A549 (cell line): ENCODE measurements at regions of chr2 and their contacts with region 1.

Region 1: GRCh38 chr2:26577434-26578112 is 63.6 kb downstream of the CIB4 start:
- DNase-seq: peak; percentile 71 to 95
- ATAC-seq: peak; percentile 73 to 93
- H3K4me3 ChIP-seq: no peak overlapping the region
- H3K27ac ChIP-seq: peak overlapping the region in 1 of 2 experiments; percentile 47; a peak in 3 of 6 replicates
- H3K4me1 ChIP-seq: peaks cover 4% of the 10 kb centered on the region; the same call in 2 of the 3 replicates
- CTCF ChIP-seq: peak; percentile 98
- EP300 ChIP-seq: no peak
- POLR2A ChIP-seq: no peak
- RAD21 ChIP-seq: peak; percentile 93 to 96

Region 2: GRCh38 chr2:26316041-26316440 is 261.5 kb before region 1 on chr2:
- CTCF ChIA-PET with region 1: interaction called, 11 read pairs
- POLR2A ChIA-PET with region 1: no interaction called
- DNase-seq: peak; percentile 35 to 64
- ATAC-seq: peak; percentile 48 to 73
- H3K4me3 ChIP-seq: no peak overlapping the region
- H3K27ac ChIP-seq: no peak overlapping the region
- H3K4me1 ChIP-seq: no peaks in the 10 kb centered on the region
- CTCF ChIP-seq: peak; percentile 44
- EP300 ChIP-seq: no peak
- POLR2A ChIP-seq: no peak
- RAD21 ChIP-seq: peak; percentile 46 to 60; a peak in 3 of 5 replicates

Region 3: GRCh38 chr2:26382564-26382963 is 195.0 kb before region 1 on chr2:
- CTCF ChIA-PET with region 1: no interaction called
- POLR2A ChIA-PET with region 1: no interaction called
- DNase-seq: no peak
- ATAC-seq: no peak
- H3K4me3 ChIP-seq: no peak overlapping the region
- H3K27ac ChIP-seq: no peak overlapping the region
- H3K4me1 ChIP-seq: no peaks in the 10 kb centered on the region
- CTCF ChIP-seq: no peak
- EP300 ChIP-seq: no peak
- POLR2A ChIP-seq: no peak
- RAD21 ChIP-seq: no peak

Region 4: GRCh38 chr2:26503231-26503880 is 74.2 kb before region 1 on chr2:
- CTCF ChIA-PET with region 1: interaction called, 60 read pairs
- POLR2A ChIA-PET with region 1: no interaction called
- DNase-seq: peak; percentile 91 to 99
- ATAC-seq: peak; percentile 95 to 99
- H3K4me3 ChIP-seq: peak overlapping the region; percentile 63
- H3K27ac ChIP-seq: peak overlapping the region; percentile 82 to 91
- H3K4me1 ChIP-seq: peaks cover 5% of the 10 kb centered on the region; the same call in 1 of the 3 replicates
- CTCF ChIP-seq: peak; percentile 100
- EP300 ChIP-seq: no peak
- POLR2A ChIP-seq: peak; percentile 91
- RAD21 ChIP-seq: peak; percentile 45 to 84; a peak in 4 of 5 replicates

Region 5: DNA sequence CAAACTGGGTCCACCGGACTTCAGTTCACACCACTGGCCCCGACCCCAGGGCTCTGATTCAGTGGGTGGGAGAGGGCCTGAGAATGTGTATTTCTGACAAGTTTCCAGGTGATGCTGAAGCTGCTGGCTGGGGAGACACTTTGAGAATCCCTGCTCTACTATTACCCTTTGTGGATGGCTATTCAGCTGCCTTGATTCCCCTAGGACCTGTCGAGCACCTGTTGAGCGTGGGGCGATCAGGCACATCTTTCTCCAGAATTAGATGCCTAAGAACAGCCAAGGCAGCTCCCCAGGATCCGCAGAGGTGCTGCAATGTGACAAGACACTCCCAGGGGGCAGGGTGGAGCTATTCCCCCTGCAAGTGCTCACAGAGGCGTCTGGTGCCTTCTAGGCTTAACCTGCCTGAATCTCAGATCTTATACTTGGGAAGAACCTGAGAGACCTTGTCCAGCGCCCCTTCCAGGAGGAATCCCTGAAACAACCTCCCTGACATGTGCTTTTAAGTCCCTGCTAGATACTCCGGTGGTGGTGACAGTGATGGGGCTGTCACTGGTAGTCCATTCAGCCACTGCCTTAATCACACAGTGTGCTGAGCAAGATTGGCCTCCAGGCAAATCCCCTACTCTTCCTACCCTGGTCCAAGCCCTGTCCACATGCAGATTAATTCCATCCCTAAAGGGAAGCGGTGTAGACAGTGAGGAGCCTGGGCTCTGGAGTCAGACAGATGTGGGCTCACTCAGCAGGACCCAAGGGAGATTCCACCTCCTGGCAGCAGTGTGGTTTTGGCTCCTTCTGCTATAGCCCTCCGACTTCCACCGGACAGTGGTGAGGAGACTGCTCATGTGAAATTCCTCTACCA is 56.3 kb before region 1 on chr2:
- CTCF ChIA-PET with region 1: interaction called, 90 read pairs
- POLR2A ChIA-PET with region 1: no interaction called
- DNase-seq: peak; percentile 69 to 83
- ATAC-seq: peak; percentile 81 to 92
- H3K4me3 ChIP-seq: no peak overlapping the region
- H3K27ac ChIP-seq: no peak overlapping the region
- H3K4me1 ChIP-seq: no peaks in the 10 kb centered on the region
- CTCF ChIP-seq: peak; percentile 61
- EP300 ChIP-seq: no peak
- POLR2A ChIP-seq: no peak
- RAD21 ChIP-seq: peak; percentile 60 to 68

Region 6: DNA sequence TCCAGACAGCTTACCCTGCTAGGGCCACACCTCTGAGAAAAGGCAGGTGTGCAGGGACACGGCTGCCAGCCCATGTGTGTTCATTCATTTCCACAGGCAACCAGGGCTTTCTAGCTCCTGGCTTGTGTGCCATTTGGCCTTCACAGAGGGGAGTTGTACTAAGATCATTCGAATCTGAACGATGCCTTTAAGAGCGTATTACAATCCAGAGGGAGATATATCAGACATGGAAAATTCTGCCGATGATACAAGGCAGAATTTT is 35.4 kb before region 1 on chr2:
- CTCF ChIA-PET with region 1: interaction called, 28 read pairs
- POLR2A ChIA-PET with region 1: no interaction called
- DNase-seq: no peak
- ATAC-seq: peak in 1 of 2 experiments; percentile 28; a peak in 2 of 6 replicates
- H3K4me3 ChIP-seq: no peak overlapping the region
- H3K27ac ChIP-seq: no peak overlapping the region
- H3K4me1 ChIP-seq: peaks cover 3% of the 10 kb centered on the region; the same call in 1 of the 3 replicates
- CTCF ChIP-seq: no peak
- EP300 ChIP-seq: no peak
- POLR2A ChIP-seq: no peak
- RAD21 ChIP-seq: no peak

Region 7: DNA sequence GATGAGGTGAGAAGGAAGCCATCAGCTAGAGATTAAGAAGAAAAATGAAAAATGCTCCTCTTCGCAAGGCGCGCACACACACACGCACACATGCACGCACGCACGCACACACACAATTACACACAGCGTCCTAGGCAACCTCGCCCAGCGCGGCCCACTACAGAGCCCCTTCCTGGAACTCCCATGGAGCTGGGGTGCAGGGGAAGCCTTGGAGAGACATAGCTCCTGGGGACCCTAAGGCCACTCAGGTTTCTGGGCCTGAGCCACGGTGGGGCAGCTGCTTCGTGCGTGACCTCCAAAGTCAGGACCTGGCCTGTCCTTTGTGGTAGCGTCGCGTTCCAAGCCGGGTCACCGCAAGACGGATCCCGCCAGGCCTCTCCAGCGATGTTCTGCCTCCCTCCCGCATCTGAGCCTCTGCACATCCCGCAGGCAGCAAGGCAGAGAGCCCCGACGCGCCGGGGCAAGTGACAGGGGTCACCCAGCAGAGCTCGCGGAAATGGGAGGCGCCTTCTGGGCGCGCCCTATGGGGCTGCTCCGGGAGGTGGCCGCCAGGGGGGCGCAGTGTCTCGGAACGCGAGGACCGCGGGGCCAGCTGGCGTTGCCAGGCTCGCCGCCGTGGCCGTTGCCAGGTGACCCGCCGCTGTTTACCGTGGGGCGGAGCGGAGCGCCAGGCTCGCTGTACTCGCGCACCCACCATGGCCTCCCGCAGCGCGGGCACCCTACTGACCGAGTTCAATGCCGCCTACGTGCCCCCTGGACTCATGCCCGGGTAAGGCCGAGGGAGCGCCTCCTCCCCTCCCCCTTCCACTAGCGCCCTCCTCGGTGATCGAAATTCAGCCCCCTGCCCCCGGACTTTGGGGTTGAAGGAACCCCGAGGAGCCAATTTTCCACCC is 15.4 kb before region 1 on chr2:
- CTCF ChIA-PET with region 1: interaction called, 237 read pairs
- POLR2A ChIA-PET with region 1: interaction called, 4 read pairs
- DNase-seq: peak; percentile 64 to 92
- ATAC-seq: peak; percentile 84 to 93
- H3K4me3 ChIP-seq: peak overlapping the region; percentile 50
- H3K27ac ChIP-seq: peak overlapping the region; percentile 51 to 76
- H3K4me1 ChIP-seq: peaks cover 8% of the 10 kb centered on the region; the same call in 1 of the 3 replicates
- CTCF ChIP-seq: peak; percentile 51
- EP300 ChIP-seq: no peak
- POLR2A ChIP-seq: no peak
- RAD21 ChIP-seq: peak; percentile 13 to 49; a peak in 3 of 5 replicates

Region 8: DNA sequence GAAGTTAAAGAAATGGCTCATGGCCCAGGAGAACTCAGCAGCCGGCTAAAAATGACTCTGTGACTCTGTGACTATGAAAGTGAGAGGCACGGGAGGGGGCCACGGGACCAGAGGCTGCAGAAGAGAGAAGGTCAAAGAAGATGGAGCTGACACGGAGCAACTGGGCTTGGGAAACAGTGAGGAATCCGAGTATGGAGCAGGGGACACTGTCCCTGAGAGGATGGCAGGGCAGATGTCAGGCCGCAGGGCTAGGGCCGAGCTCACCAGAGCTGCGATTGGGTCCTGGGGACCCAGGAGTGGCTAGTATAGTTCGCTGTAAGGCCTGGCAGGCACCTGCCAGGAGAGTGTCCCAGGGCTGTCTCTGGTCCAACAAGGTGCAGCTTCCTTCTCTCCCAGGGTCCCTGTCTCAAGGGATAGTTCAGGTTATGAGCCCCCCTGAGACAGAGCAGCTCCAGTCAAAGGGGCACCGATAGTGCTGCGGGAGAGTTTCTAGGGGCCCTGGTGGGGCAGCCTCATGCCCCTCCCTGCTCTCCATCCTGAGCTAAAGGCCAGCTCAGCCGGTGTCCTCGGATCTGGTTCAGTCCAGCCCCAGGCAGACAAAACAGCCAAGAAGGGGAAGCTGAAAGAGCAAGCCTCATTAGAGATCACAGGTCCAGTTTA is 20.9 kb after region 1 on chr2:
- CTCF ChIA-PET with region 1: interaction called, 137 read pairs
- POLR2A ChIA-PET with region 1: no interaction called
- DNase-seq: no peak
- ATAC-seq: peak in 1 of 2 experiments; percentile 53; a peak in 3 of 6 replicates
- H3K4me3 ChIP-seq: no peak overlapping the region
- H3K27ac ChIP-seq: peak overlapping the region in 1 of 2 experiments; percentile 18; a peak in 1 of 6 replicates
- H3K4me1 ChIP-seq: 0 out of 3 replicates have a peak, but pooled peaks cover 8% of the 10 kb centered on the region
- CTCF ChIP-seq: no peak
- EP300 ChIP-seq: no peak
- POLR2A ChIP-seq: no peak
- RAD21 ChIP-seq: no peak

Region 9: DNA sequence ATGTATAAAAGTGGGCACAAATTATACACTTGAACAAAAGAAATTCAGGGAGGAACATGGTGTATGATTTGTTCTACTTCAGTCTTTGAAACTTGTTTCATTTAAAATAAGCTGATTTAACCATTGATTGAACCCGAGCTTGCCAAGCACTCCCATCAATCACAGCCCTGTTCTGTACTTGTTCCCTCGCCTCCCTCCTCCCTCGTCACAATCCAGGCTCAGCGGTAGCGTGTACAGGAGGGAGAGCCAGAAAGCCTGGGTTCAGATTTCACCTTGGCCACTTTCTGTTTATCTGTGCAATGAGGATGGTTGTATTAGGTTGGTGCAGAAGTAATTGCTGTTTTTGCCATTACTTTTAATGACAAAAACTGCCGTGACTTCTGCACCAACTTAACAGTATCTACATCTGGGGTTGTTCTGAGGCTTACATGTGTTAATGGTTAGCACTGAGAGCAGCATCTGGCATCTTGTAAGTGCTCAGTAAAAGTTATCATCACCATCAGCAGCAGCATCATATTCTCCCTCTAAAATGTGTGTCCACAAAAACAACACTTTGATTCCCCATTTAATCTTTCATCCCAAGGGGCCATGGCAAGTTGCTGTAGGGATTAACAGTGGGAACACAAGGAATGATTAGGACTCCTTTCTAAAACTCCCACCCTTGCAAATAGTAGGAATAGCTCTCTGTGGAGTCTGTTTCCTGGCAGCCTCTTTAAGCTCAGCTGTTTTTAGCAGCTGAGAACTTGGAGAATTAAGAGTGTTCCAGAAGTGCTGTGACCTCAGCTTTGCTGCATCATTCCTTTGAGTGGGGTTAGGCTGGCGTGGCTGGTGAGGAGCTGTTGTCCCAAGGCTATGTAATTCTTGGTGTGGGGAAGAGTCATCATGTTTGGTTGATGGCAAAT is 275.1 kb after region 1 on chr2:
- CTCF ChIA-PET with region 1: no interaction called
- POLR2A ChIA-PET with region 1: no interaction called
- DNase-seq: no peak
- ATAC-seq: no peak
- H3K4me3 ChIP-seq: no peak overlapping the region
- H3K27ac ChIP-seq: no peak overlapping the region
- H3K4me1 ChIP-seq: 0 out of 3 replicates have a peak, but pooled peaks cover 3% of the 10 kb centered on the region
- CTCF ChIP-seq: no peak
- EP300 ChIP-seq: no peak
- POLR2A ChIP-seq: no peak
- RAD21 ChIP-seq: no peak